ENCODE measurements at regions of chr18 and their contacts with region 1.

Region 1: DNA sequence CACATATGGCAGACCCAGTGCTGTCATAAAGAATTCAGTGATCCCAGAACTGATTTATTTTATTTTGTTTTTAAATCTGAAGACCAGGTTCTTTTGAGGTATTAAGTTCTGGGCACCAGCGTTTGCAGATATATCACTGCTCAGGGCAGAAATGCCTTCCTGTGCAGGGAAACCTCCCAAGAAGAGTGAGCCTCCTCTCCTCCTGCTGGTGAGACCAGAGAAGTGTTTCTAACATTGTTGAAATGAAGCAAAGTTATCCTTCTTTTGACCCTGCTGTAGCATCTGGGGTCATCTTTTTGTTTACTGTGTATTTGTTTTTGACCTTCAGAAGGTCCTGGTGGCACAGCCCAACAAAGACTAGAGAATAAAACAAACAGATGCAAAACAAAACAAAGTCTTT is 94.0 kb downstream of the AQP4 start:
- DNase-seq: no peak
- ATAC-seq: peak; percentile 71
- H3K4me3 ChIP-seq: no peak overlapping the region
- H3K27ac ChIP-seq: no peak overlapping the region
- H3K4me1 ChIP-seq: no peaks in the 10 kb centered on the region
- H3K27me3 ChIP-seq: no peaks in the 10 kb centered on the region; a peak in 1 of 4 replicates
- CTCF ChIP-seq: peak; percentile 45 to 47 (median 47); a peak in 5 of 6 replicates
- EP300 ChIP-seq: no peak
- POLR2A ChIP-seq: no peak
- RAD21 ChIP-seq: peak; percentile 63

Region 2: DNA sequence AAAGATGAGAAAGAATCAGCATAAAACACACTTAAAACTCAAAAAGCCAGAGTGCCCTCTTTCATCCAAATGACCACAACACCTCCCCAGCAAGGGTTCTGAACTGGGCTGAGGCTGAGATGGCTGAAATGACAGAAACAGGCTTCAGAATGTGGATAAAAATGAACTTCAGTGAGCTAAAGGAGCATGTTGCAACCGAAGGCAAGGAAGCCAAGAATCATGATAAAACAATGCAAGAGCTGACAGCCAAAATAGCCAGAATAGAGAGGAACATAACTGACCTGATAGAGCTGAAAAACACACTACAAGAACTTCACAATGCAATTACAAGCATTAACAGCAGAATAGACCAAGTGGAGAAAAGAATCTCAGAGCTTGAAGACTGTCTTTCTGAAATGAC is 650.0 kb before region 1 on chr18:
- CTCF ChIA-PET with region 1: no interaction called
- POLR2A ChIA-PET with region 1: no interaction called
- RAD21 ChIA-PET with region 1: no interaction called
- SMC1A ChIA-PET with region 1: no interaction called
- in situ Hi-C with region 1: no loop called
- intact Hi-C with region 1: no loop called
- DNase-seq: no peak
- ATAC-seq: no peak
- H3K4me3 ChIP-seq: no peak overlapping the region
- H3K27ac ChIP-seq: no peak overlapping the region
- H3K4me1 ChIP-seq: no peaks in the 10 kb centered on the region
- H3K27me3 ChIP-seq: no peaks in the 10 kb centered on the region; a peak in 1 of 4 replicates
- CTCF ChIP-seq: no peak
- EP300 ChIP-seq: no peak
- POLR2A ChIP-seq: no peak
- RAD21 ChIP-seq: no peak

Region 3: DNA sequence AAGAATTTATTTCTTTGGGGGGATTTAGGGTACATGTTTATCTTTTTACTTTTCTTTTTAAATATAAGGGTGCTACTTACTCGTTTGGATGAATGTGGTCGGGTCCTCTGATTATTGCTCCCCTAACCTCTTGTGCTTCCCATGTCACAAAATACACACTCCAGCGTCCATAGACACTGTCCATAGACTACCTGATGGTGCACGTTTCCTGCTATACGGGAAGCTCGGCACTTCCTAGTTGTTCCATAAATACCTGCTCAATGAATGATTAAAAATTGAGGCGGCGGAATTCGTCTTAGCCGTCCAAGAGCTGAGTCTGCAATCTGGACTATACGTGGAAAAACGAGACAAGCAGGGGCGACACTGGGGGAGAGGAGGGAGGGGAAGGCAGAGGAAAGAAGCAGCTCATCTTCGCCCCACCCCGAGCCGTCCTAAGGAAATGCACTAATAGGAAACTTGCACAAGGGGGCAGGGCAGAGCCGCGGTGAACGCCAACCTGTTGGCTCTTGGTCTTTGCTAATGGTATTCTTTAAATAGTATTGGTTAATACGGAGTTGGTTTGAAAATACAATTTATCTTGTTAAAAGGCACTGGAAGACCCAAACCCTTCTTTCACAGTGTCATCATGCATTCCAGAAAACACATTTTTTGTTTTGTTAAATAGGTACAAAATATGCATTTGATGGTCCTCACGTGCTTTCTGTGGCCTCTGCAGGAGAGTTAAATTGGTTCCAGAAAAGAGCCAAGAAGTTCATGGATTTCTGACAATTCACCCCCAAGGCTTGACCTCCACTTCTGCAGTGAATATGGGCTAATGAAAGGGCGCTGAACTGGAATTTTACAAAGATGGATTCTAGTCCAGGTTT is 150.1 kb before region 1 on chr18:
- CTCF ChIA-PET with region 1: interaction called, 6 read pairs
- POLR2A ChIA-PET with region 1: no interaction called
- RAD21 ChIA-PET with region 1: interaction called, 4 read pairs
- SMC1A ChIA-PET with region 1: no interaction called
- in situ Hi-C with region 1: no loop called
- intact Hi-C with region 1: loop called (anchors 2 kb)
- DNase-seq: no peak
- ATAC-seq: peak; percentile 79
- H3K4me3 ChIP-seq: no peak overlapping the region
- H3K27ac ChIP-seq: no peak overlapping the region
- H3K4me1 ChIP-seq: no peaks in the 10 kb centered on the region
- H3K27me3 ChIP-seq: no peaks in the 10 kb centered on the region
- CTCF ChIP-seq: peak; percentile 51 to 56 (median 51); a peak in 5 of 6 replicates
- EP300 ChIP-seq: no peak
- POLR2A ChIP-seq: no peak
- RAD21 ChIP-seq: peak; percentile 76

Region 4: DNA sequence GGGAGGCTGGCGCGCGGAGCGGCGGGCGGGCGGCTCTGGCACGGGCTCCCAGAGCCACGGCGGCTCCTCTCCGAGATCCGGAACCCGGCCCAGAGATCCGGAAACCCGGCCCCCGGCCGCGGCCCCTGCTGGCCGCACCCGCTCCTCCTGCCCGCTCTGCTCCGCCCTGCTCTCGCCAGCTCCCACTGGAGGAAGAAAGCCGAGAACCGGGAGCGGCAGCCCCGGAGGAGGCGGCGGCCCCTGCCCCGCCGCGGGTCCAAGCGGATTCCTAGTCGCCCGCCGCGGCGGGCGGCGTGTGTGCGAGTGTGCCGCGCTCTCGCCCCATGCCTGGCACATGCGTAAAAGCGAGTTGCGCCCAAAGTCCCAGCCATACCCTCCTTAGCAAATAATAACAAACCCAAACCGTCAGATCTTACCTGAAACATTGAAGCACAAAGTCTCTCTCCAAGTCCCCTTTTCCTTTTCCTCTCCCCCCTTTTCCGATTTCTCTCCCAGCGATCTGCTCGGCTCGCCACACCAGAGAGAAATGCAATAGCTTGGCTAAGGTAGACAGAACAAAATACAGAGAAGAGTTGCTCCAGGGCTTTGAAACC is 114.5 kb before region 1 on chr18:
- CTCF ChIA-PET with region 1: no interaction called
- POLR2A ChIA-PET with region 1: no interaction called
- RAD21 ChIA-PET with region 1: no interaction called
- SMC1A ChIA-PET with region 1: no interaction called
- in situ Hi-C with region 1: no loop called
- intact Hi-C with region 1: loop called (anchors 5 kb)
- DNase-seq: no peak
- ATAC-seq: peak; percentile 81
- H3K4me3 ChIP-seq: peak overlapping the region; percentile 69; the same call in 1 of the 2 replicates
- H3K27ac ChIP-seq: no peak overlapping the region
- H3K4me1 ChIP-seq: no peaks in the 10 kb centered on the region; the same call in 1 of the 2 replicates
- H3K27me3 ChIP-seq: peaks cover 7 to 39% of the 10 kb centered on the region in 2 experiments
- CTCF ChIP-seq: no peak
- EP300 ChIP-seq: no peak
- POLR2A ChIP-seq: peak; percentile 17; the same call in 1 of the 2 replicates
- RAD21 ChIP-seq: no peak